ENCODE measurements at regions of chr20 and their contacts with region 1.

Region 1: DNA sequence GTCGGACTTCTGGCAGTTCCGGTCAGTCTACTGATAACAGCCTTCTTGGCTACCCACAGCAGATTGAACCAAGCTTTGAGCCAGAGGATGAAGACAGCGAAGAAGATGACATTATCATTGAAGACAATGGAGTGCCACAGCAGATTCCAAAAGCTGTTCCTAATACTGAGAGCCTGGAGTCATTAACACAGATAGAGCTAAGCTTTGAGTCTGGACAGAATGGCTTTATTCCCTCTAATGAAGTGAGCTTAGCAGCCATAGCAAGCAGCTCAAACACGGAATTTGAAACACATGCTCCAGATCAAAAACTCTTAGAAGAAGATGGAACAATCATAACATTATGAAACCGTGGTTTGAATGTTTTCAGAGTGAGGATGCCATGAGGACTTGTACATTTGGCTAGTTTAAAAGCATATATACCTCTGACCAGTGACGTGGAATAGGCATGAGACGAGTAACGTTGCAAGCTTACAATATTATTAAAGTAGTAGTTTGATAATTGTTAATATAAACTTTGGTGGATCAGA is 18.8 kb downstream of the PARD6B start:
- DNase-seq: no peak
- H3K4me3 ChIP-seq: no peak overlapping the region
- H3K27ac ChIP-seq: no peak overlapping the region
- H3K4me1 ChIP-seq: peaks cover 29% of the 10 kb centered on the region
- H3K27me3 ChIP-seq: no peaks in the 10 kb centered on the region
- CTCF ChIP-seq: no peak

Region 2: GRCh38 chr20:50575847-50576720 is 174.1 kb before region 1 on chr20:
- CTCF ChIA-PET with region 1: no interaction called
- dilution Hi-C with region 1: no loop called
- in situ Hi-C with region 1: no loop called
- intact Hi-C with region 1: loop called (anchors 2 kb)
- DNase-seq: no peak
- H3K4me3 ChIP-seq: no peak overlapping the region
- H3K27ac ChIP-seq: no peak overlapping the region
- H3K4me1 ChIP-seq: no peaks in the 10 kb centered on the region
- H3K27me3 ChIP-seq: no peaks in the 10 kb centered on the region
- CTCF ChIP-seq: peak; percentile 57 to 75

Region 3: DNA sequence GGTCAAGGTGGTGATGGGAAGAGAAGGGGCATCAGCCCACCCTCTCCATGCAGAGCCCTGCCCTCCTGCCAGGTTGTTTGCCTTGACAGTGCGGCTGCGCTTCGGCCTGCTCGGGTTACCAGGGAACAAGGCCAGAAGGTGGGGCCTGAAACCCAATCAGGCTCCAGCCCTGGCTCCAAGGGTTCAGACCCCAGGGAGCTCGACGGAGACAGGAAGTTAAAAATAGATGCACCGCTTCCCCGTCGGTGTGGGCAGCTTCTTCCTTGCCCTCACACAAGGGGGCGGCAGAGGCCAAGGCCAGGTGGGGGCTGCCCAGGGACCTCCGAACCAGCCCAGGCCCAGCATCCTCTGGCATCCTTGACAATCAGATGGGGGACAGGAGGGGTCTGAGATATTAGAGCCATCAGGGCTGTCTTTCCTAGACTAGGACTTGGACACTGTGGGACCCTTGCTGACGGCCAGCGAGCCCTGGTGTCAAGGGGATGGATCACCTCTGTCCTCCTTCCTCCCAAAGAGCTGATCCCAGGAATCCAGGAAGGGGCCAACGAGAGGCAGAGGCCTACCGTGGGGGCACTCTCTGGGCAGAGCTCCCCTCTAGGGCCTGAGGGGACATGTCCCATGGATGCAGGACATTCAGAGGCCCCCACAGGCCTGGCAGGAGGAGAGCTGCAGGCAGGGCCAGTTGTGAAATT is 124.1 kb before region 1 on chr20:
- CTCF ChIA-PET with region 1: no interaction called
- dilution Hi-C with region 1: loop called (anchors 5 kb)
- in situ Hi-C with region 1: no loop called
- intact Hi-C with region 1: no loop called
- DNase-seq: no peak
- H3K4me3 ChIP-seq: no peak overlapping the region
- H3K27ac ChIP-seq: no peak overlapping the region
- H3K4me1 ChIP-seq: peaks cover 26% of the 10 kb centered on the region
- H3K27me3 ChIP-seq: no peaks in the 10 kb centered on the region
- CTCF ChIP-seq: peak; percentile 37 to 51

Region 4: GRCh38 chr20:50663095-50663850 is 86.9 kb before region 1 on chr20:
- CTCF ChIA-PET with region 1: interaction called, 17 read pairs
- dilution Hi-C with region 1: no loop called
- in situ Hi-C with region 1: loop called in 1 of 2 experiments (anchors 10 kb)
- intact Hi-C with region 1: loop called (anchors 1 kb)
- DNase-seq: peak; percentile 71
- H3K4me3 ChIP-seq: no peak overlapping the region
- H3K27ac ChIP-seq: no peak overlapping the region
- H3K4me1 ChIP-seq: peaks cover 4% of the 10 kb centered on the region
- H3K27me3 ChIP-seq: no peaks in the 10 kb centered on the region
- CTCF ChIP-seq: peak; percentile 35 to 53

Measured in mammary epithelial cell (primary cell).